ENCODE measurements at regions of chr9 and their contacts with region 1.

Region 1: DNA sequence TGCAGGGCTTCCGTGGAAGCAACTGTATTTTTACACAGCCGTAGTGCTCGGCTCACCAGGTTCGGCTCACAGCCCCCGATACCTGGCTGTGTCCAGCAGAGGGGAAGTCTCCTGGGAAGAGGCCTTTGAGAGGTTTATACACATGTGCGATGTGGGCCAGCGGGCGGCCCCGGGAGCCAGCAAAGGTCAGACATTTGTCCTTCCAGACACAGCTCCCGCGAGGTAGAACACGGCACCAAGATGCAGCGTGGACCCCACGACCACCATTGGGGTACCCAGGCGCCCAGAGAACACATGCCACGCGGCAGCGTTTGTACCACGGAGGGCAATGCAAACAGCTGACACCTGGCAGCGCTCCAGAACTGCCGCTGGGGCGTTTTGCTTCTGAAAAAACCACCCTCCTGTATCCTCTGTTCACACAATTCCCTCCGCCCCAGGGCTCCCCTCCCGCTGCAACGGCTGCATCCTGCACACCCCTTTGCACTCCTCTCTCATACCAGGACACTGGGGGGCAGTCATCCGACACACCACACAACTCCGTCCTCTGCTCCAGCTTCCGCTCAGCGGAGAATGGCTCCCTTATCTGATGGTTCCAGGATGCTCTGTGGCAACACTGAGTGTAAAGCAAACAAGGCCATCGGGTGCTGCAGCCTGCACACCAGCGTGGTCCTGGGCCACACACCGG is 235.3 kb downstream of the SYK start:
- DNase-seq: peak; percentile 77 to 91
- ATAC-seq: peak; percentile 96 to 98
- H3K4me3 ChIP-seq: no peak overlapping the region
- H3K27ac ChIP-seq: peak overlapping the region; percentile 66 to 89
- H3K4me1 ChIP-seq: peaks cover 21% of the 10 kb centered on the region
- CTCF ChIP-seq: peak; percentile 75
- EP300 ChIP-seq: no peak
- POLR2A ChIP-seq: no peak
- RAD21 ChIP-seq: peak; percentile 91 to 96

Region 2: GRCh38 chr9:90972057-90972456 is 64.9 kb before region 1 on chr9:
- CTCF ChIA-PET with region 1: no interaction called
- POLR2A ChIA-PET with region 1: no interaction called
- DNase-seq: no peak
- ATAC-seq: no peak
- H3K4me3 ChIP-seq: no peak overlapping the region
- H3K27ac ChIP-seq: no peak overlapping the region
- H3K4me1 ChIP-seq: no peaks in the 10 kb centered on the region
- CTCF ChIP-seq: no peak
- EP300 ChIP-seq: no peak
- POLR2A ChIP-seq: no peak
- RAD21 ChIP-seq: no peak

Region 3: DNA sequence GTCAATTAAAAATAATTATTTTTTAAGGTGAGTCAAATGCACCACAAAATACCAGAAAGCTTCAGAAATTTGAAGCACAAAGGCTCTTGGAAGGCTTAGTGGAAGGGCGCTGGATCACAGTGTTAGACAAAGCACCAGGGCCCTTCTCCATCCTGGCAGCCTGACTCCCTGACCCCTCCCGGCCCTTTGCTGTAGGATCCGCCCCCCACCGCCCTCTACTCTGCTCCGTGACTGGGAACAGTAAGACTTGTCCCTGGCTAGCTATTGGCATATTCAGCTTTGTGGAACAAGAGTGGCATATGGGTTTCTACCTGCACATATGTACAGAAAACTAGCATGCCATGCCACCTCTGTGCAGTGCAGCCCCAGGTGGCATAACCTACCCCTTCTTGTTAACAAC is 13.2 kb before region 1 on chr9:
- CTCF ChIA-PET with region 1: interaction called, 14 read pairs
- POLR2A ChIA-PET with region 1: no interaction called
- DNase-seq: no peak
- ATAC-seq: no peak
- H3K4me3 ChIP-seq: no peak overlapping the region
- H3K27ac ChIP-seq: no peak overlapping the region
- H3K4me1 ChIP-seq: no peaks in the 10 kb centered on the region
- CTCF ChIP-seq: no peak
- EP300 ChIP-seq: no peak
- POLR2A ChIP-seq: no peak
- RAD21 ChIP-seq: no peak

Region 4: GRCh38 chr9:91433180-91433579 is 396.2 kb after region 1 on chr9:
- CTCF ChIA-PET with region 1: interaction called, 41 read pairs
- POLR2A ChIA-PET with region 1: interaction called, 4 read pairs
- DNase-seq: peak; percentile 68 to 91
- ATAC-seq: peak; percentile 99
- H3K4me3 ChIP-seq: no peak overlapping the region
- H3K27ac ChIP-seq: peak overlapping the region; percentile 26 to 33; a peak in 3 of 6 replicates
- H3K4me1 ChIP-seq: peaks cover 14% of the 10 kb centered on the region
- CTCF ChIP-seq: peak; percentile 66
- EP300 ChIP-seq: 0 out of 5 replicates have a peak, but pooled peaks of 1 of the 2 experiments have one; percentile 25
- POLR2A ChIP-seq: no peak
- RAD21 ChIP-seq: peak; percentile 80 to 85

Measured in A549 (cell line).